GM12878 (cell line): ENCODE measurements at regions of chr12 and their contacts with region 1.

Region 1: GRCh38 chr12:121992059-121992879 is 29.4 kb upstream of the BCL7A start:
- DNase-seq: peak; percentile 96
- ATAC-seq: peak; percentile 89
- H3K4me3 ChIP-seq: peak overlapping the region; percentile 29; the same call in 1 of the 2 replicates
- H3K27ac ChIP-seq: peak overlapping the region; percentile 71
- H3K4me1 ChIP-seq: peaks cover 23% of the 10 kb centered on the region
- H3K27me3 ChIP-seq: peaks cover 0 to 3% of the 10 kb centered on the region in 2 experiments; a peak in 1 of 4 replicates
- CTCF ChIP-seq: no peak
- EP300 ChIP-seq: peak; percentile 83 to 92
- POLR2A ChIP-seq: peak; percentile 65
- RAD21 ChIP-seq: peak; percentile 13; the same call in 1 of the 2 replicates

Region 2: GRCh38 chr12:121513464-121514183 is 478.6 kb before region 1 on chr12:
- CTCF ChIA-PET with region 1: no interaction called
- POLR2A ChIA-PET with region 1: no interaction called
- RAD21 ChIA-PET with region 1: no interaction called
- SMC1A ChIA-PET with region 1: no interaction called
- in situ Hi-C with region 1: no loop called
- intact Hi-C with region 1: no loop called
- DNase-seq: no peak
- ATAC-seq: peak; percentile 97
- H3K4me3 ChIP-seq: no peak overlapping the region
- H3K27ac ChIP-seq: peak overlapping the region; percentile 36
- H3K4me1 ChIP-seq: peaks cover 11% of the 10 kb centered on the region
- H3K27me3 ChIP-seq: no peaks in the 10 kb centered on the region
- CTCF ChIP-seq: no peak
- EP300 ChIP-seq: no peak
- POLR2A ChIP-seq: no peak
- RAD21 ChIP-seq: no peak

Region 3: DNA sequence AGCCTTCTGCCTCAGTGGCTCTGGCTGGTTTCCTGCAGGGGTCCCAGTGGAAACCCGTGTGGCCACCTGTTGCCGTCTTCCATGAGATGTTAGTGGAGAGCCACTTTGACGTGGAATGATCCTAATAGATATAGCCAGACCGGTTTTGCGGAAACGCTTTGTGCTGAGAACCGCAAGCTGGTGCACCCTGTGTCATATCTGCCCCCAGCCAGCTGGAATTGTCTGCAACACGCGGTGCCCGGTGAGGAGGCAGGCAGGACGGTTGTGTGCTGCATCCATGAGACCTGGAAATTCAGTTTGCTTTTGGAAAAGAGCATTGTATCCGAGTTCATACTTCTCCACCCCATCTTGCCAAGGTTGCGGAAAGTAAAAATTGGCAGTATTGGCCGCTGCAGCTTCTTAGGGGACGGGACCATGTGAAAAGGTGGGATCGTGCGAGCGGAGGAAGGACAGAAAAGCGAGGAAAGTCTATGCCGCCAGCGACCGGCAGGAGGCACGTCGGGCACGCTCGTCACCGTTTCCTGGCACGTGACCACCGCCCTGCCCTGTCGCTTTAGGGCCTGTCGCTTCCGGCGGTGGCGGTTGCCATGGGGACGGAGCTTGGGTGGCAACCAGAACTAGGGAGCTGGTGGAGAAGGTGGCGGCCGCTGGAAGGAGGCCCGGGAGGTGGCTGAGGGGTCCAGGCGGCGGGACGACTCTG is 74.1 kb before region 1 on chr12 and contains the start of gene CFAP251:
- CTCF ChIA-PET with region 1: interaction called, 14 read pairs
- POLR2A ChIA-PET with region 1: interaction called, 3 read pairs
- RAD21 ChIA-PET with region 1: interaction called, 15 read pairs
- SMC1A ChIA-PET with region 1: interaction called, 21 read pairs
- in situ Hi-C with region 1: no loop called
- intact Hi-C with region 1: no loop called
- DNase-seq: peak; percentile 50
- ATAC-seq: peak; percentile 100
- H3K4me3 ChIP-seq: peak within 1 kb of the TSS; percentile 57
- H3K27ac ChIP-seq: peak within 1 kb of the TSS; percentile 13; the same call in 1 of the 2 replicates
- H3K4me1 ChIP-seq: peaks cover 8% of the 10 kb centered on the region; the same call in 1 of the 2 replicates
- H3K27me3 ChIP-seq: no peaks in the 10 kb centered on the region
- CTCF ChIP-seq: peak; percentile 60 to 79 (median 73)
- EP300 ChIP-seq: no peak; a peak in 1 of 4 replicates
- POLR2A ChIP-seq: peak; percentile 67
- RAD21 ChIP-seq: peak; percentile 48
- polyA plus RNA-seq, gene CFAP251: 0.27 to 0.42 TPM

Region 4: DNA sequence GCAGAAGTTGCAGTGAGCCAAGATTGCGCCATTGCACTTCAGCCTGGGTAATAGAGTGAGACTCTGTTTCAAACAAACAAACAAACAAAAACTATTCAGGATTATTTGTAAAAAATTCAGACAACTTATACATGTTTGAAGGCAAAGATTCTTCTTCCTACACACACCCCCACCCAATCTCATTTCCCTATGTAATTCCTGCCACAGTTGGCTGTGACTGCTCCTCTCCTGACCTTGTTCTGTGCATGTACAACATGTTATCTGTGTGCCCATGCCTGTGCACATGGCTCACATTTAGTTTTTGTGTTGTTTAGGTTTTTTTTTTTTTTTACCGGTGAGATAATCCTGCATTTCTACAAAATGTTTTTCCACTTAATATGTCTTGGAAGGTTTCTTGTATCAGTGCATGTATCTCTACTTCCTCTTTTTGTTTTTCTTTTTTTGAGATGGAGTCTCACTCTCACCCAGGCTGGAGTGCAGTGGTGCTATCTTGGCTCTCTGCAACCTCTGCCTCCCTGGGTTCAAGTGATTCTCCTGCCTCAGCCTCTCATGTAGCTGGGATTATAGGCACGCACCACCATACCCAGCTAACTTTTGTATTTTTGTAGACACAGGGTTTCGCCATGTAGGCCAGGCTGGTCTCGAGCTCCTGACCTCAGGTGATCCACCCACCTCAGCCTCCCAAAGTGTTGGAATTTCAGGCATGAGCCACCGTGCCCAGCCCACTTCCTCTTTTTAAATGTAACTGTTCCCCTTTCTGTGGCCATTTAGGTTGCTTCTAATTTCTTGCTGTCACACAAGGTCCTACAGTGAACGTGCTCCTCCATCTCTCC is 65.2 kb before region 1 on chr12:
- CTCF ChIA-PET with region 1: interaction called, 5 read pairs
- POLR2A ChIA-PET with region 1: no interaction called
- RAD21 ChIA-PET with region 1: no interaction called
- SMC1A ChIA-PET with region 1: interaction called, 3 read pairs
- in situ Hi-C with region 1: no loop called
- intact Hi-C with region 1: loop called (anchors 2 kb)
- DNase-seq: peak; percentile 33
- ATAC-seq: peak; percentile 84
- H3K4me3 ChIP-seq: no peak overlapping the region
- H3K27ac ChIP-seq: 0 out of 2 replicates have a peak overlapping the region, but pooled peaks have one; percentile 27
- H3K4me1 ChIP-seq: peaks cover 21% of the 10 kb centered on the region
- H3K27me3 ChIP-seq: no peaks in the 10 kb centered on the region
- CTCF ChIP-seq: no peak
- EP300 ChIP-seq: 0 out of 4 replicates have a peak, but pooled peaks of 1 of the 2 experiments have one; percentile 28
- POLR2A ChIP-seq: no peak
- RAD21 ChIP-seq: no peak

Region 5: GRCh38 chr12:121980191-121980891 is 11.9 kb before region 1 on chr12:
- CTCF ChIA-PET with region 1: interaction called, 4 read pairs
- POLR2A ChIA-PET with region 1: interaction called, 12 read pairs
- RAD21 ChIA-PET with region 1: interaction called, 28 read pairs
- SMC1A ChIA-PET with region 1: interaction called, 7 read pairs
- in situ Hi-C with region 1: no loop called
- intact Hi-C with region 1: no loop called
- DNase-seq: peak; percentile 42
- ATAC-seq: peak; percentile 82
- H3K4me3 ChIP-seq: peak overlapping the region; percentile 5; the same call in 1 of the 2 replicates
- H3K27ac ChIP-seq: peak overlapping the region; percentile 40
- H3K4me1 ChIP-seq: peaks cover 33% of the 10 kb centered on the region
- H3K27me3 ChIP-seq: no peaks in the 10 kb centered on the region
- CTCF ChIP-seq: no peak
- EP300 ChIP-seq: no peak; a peak in 1 of 4 replicates
- POLR2A ChIP-seq: no peak
- RAD21 ChIP-seq: no peak

Region 6: GRCh38 chr12:122003651-122004611 is 11.7 kb after region 1 on chr12:
- CTCF ChIA-PET with region 1: interaction called, 4 read pairs
- POLR2A ChIA-PET with region 1: no interaction called
- RAD21 ChIA-PET with region 1: interaction called, 3 read pairs
- SMC1A ChIA-PET with region 1: interaction called, 20 read pairs
- in situ Hi-C with region 1: no loop called
- intact Hi-C with region 1: no loop called
- DNase-seq: no peak
- ATAC-seq: peak; percentile 80
- H3K4me3 ChIP-seq: no peak overlapping the region
- H3K27ac ChIP-seq: no peak overlapping the region
- H3K4me1 ChIP-seq: peaks cover 33% of the 10 kb centered on the region
- H3K27me3 ChIP-seq: peaks cover 0 to 5% of the 10 kb centered on the region in 2 experiments; a peak in 2 of 4 replicates
- CTCF ChIP-seq: no peak
- EP300 ChIP-seq: no peak
- POLR2A ChIP-seq: no peak; the same call in 1 of the 2 replicates
- RAD21 ChIP-seq: no peak

Region 7: GRCh38 chr12:122028165-122028904 is 36.1 kb after region 1 on chr12:
- CTCF ChIA-PET with region 1: interaction called, 5 read pairs
- POLR2A ChIA-PET with region 1: interaction called, 9 read pairs
- RAD21 ChIA-PET with region 1: interaction called, 8 read pairs
- SMC1A ChIA-PET with region 1: interaction called, 6 read pairs
- in situ Hi-C with region 1: no loop called
- intact Hi-C with region 1: loop called (anchors 5 kb)
- DNase-seq: no peak
- ATAC-seq: no peak
- H3K4me3 ChIP-seq: no peak overlapping the region; the same call in 1 of the 2 replicates
- H3K27ac ChIP-seq: no peak overlapping the region
- H3K4me1 ChIP-seq: peaks cover 42% of the 10 kb centered on the region
- H3K27me3 ChIP-seq: peaks cover 3 to 8% of the 10 kb centered on the region in 2 experiments; a peak in 2 of 4 replicates
- CTCF ChIP-seq: no peak
- EP300 ChIP-seq: no peak
- POLR2A ChIP-seq: no peak
- RAD21 ChIP-seq: no peak

Region 8: GRCh38 chr12:122051231-122051876 is 59.1 kb after region 1 on chr12:
- CTCF ChIA-PET with region 1: no interaction called
- POLR2A ChIA-PET with region 1: no interaction called
- RAD21 ChIA-PET with region 1: no interaction called
- SMC1A ChIA-PET with region 1: no interaction called
- in situ Hi-C with region 1: no loop called
- intact Hi-C with region 1: no loop called
- DNase-seq: no peak
- ATAC-seq: no peak
- H3K4me3 ChIP-seq: no peak overlapping the region
- H3K27ac ChIP-seq: no peak overlapping the region
- H3K4me1 ChIP-seq: no peaks in the 10 kb centered on the region
- H3K27me3 ChIP-seq: no peaks in the 10 kb centered on the region
- CTCF ChIP-seq: no peak
- EP300 ChIP-seq: no peak
- POLR2A ChIP-seq: no peak
- RAD21 ChIP-seq: no peak